ENCODE measurements at regions of chr11 and their contacts with region 1.

Region 1: GRCh38 chr11:97722065-97722464 is 1298.7 kb upstream of the CNTN5 start:
- DNase-seq: peak; percentile 24
- ATAC-seq: peak; percentile 59; the same call in 2 of the 3 replicates
- H3K4me3 ChIP-seq: no peak overlapping the region
- H3K27ac ChIP-seq: no peak overlapping the region
- H3K4me1 ChIP-seq: peaks cover 21% of the 10 kb centered on the region
- H3K27me3 ChIP-seq: no peaks in the 10 kb centered on the region
- CTCF ChIP-seq: no peak
- EP300 ChIP-seq: no peak
- POLR2A ChIP-seq: no peak
- RAD21 ChIP-seq: no peak

Region 2: GRCh38 chr11:97732011-97732625 is 10.1 kb after region 1 on chr11:
- CTCF ChIA-PET with region 1: no interaction called
- POLR2A ChIA-PET with region 1: interaction called, 4 read pairs
- in situ Hi-C with region 1: no loop called
- intact Hi-C with region 1: loop called (anchors 1 kb)
- DNase-seq: peak; percentile 92
- ATAC-seq: peak; percentile 99
- H3K4me3 ChIP-seq: no peak overlapping the region
- H3K27ac ChIP-seq: peak overlapping the region; percentile 52
- H3K4me1 ChIP-seq: peaks cover 29% of the 10 kb centered on the region
- H3K27me3 ChIP-seq: no peaks in the 10 kb centered on the region; a peak in 1 of 5 replicates
- CTCF ChIP-seq: no peak
- EP300 ChIP-seq: peak in 1 of 2 experiments; percentile 53; a peak in 2 of 4 replicates
- POLR2A ChIP-seq: no peak
- RAD21 ChIP-seq: no peak